Activated CD4-positive, alpha-beta T cell treated with anti-CD3 and anti-CD28 coated beads for 36 hours (primary cell): ENCODE measurements at regions of chr2 and their contacts with region 1.

Region 1: DNA sequence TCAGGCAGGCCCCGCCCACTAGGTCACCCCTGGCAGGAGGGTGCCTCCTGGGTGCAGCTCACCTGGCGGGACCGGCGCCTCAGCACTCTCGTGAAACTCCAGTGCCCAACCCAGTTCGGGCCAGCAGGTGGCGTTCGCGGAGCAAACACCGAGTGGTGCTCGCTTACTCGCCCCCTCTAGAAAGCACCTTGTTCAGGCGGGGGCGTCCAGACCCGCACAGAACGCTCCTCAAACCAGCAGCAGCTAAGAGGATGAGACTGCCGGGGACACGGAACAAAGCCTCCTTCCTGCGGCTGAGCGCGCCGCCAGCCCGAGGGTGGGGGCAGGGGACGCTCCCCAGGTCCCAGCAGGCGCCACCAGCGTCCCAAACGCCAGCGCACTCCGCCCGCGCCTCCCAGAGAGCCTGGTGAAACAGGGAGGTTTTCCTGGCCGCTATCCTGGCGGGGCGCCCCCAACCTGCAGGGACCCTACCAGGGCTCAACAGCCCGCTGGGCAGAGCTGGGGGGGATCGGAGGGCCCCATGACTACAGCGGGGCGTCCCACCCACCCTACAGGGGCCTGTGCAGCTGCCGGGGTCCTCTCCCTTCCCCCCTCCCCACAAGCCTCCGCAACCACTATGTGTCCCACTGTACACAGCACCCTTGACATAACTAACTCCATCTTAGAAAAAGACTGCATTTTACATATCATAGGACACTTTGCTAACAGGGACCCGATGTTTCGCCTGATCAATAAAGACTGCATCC is 44.7 kb downstream of the MRPS5 start:
- DNase-seq: peak; percentile 96
- ATAC-seq: peak; percentile 77
- H3K4me3 Mint-ChIP-seq: peak overlapping the region; percentile 69
- H3K27ac Mint-ChIP-seq: peak overlapping the region; percentile 78
- H3K4me1 Mint-ChIP-seq: peaks cover 71% of the 10 kb centered on the region
- H3K27me3 Mint-ChIP-seq: no peaks in the 10 kb centered on the region

Region 2: GRCh38 chr2:94986392-94986963 is 90.5 kb before region 1 on chr2:
- CTCF ChIA-PET with region 1: interaction called, 4 read pairs
- POLR2A ChIA-PET with region 1: no interaction called
- intact Hi-C with region 1: loop called in 1 of 2 experiments (anchors 1 kb)
- DNase-seq: peak; percentile 70
- ATAC-seq: peak; percentile 55
- H3K4me3 Mint-ChIP-seq: no peak overlapping the region
- H3K27ac Mint-ChIP-seq: no peak overlapping the region
- H3K4me1 Mint-ChIP-seq: no peaks in the 10 kb centered on the region
- H3K27me3 Mint-ChIP-seq: peaks cover 3% of the 10 kb centered on the region

Region 3: GRCh38 chr2:95034221-95034620 is 42.7 kb before region 1 on chr2:
- CTCF ChIA-PET with region 1: interaction called, 17 read pairs
- POLR2A ChIA-PET with region 1: interaction called, 3 read pairs
- intact Hi-C with region 1: no loop called
- DNase-seq: peak; percentile 50
- ATAC-seq: peak; percentile 84
- H3K4me3 Mint-ChIP-seq: no peak overlapping the region
- H3K27ac Mint-ChIP-seq: no peak overlapping the region
- H3K4me1 Mint-ChIP-seq: peaks cover 79% of the 10 kb centered on the region
- H3K27me3 Mint-ChIP-seq: no peaks in the 10 kb centered on the region

Region 4: GRCh38 chr2:95053543-95053942 is 23.4 kb before region 1 on chr2:
- CTCF ChIA-PET with region 1: interaction called, 64 read pairs
- POLR2A ChIA-PET with region 1: interaction called, 3 read pairs
- intact Hi-C with region 1: loop called in 1 of 2 experiments (anchors 2 kb)
- DNase-seq: peak; percentile 51
- ATAC-seq: no peak
- H3K4me3 Mint-ChIP-seq: no peak overlapping the region
- H3K27ac Mint-ChIP-seq: no peak overlapping the region
- H3K4me1 Mint-ChIP-seq: peaks cover 67% of the 10 kb centered on the region
- H3K27me3 Mint-ChIP-seq: no peaks in the 10 kb centered on the region

Region 5: DNA sequence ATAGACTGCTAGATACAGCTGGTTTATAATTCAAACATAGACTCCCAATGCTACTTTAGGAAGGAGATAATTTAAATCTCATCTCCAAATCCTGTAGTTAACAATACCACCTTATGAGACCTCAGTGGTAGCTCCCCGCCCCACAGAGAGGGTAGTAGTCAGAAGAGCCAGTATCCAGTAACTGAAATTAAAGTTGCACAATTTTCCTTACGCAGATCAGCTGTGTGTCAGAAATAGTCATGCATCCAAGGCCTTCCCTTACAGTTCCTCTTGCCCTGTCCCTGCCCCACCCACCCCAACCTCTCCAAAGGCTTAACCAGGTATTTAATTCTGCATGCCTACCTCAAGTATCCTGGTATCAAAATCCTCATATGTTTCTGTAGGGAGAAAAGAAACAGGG is 29.1 kb after region 1 on chr2:
- CTCF ChIA-PET with region 1: interaction called, 11 read pairs
- POLR2A ChIA-PET with region 1: interaction called, 7 read pairs
- intact Hi-C with region 1: no loop called
- DNase-seq: no peak
- ATAC-seq: no peak
- H3K4me3 Mint-ChIP-seq: no peak overlapping the region
- H3K27ac Mint-ChIP-seq: peak overlapping the region; percentile 4
- H3K4me1 Mint-ChIP-seq: no peaks in the 10 kb centered on the region
- H3K27me3 Mint-ChIP-seq: no peaks in the 10 kb centered on the region

Region 6: GRCh38 chr2:95121407-95122196 is 44.6 kb after region 1 on chr2 and contains the start of gene MRPS5:
- CTCF ChIA-PET with region 1: interaction called, 49 read pairs
- POLR2A ChIA-PET with region 1: no interaction called
- intact Hi-C with region 1: loop called (anchors 2 kb)
- DNase-seq: peak; percentile 93
- ATAC-seq: peak; percentile 89
- H3K4me3 Mint-ChIP-seq: peak within 1 kb of the TSS; percentile 97
- H3K27ac Mint-ChIP-seq: peak within 1 kb of the TSS; percentile 94
- H3K4me1 Mint-ChIP-seq: peaks cover 37% of the 10 kb centered on the region
- H3K27me3 Mint-ChIP-seq: no peaks in the 10 kb centered on the region
- total RNA-seq, gene MRPS5: 90.7 to 97.1 TPM

Region 7: GRCh38 chr2:95165129-95166064 is 88.4 kb after region 1 on chr2 and contains the start of gene ZNF2:
- CTCF ChIA-PET with region 1: interaction called, 6 read pairs
- POLR2A ChIA-PET with region 1: no interaction called
- intact Hi-C with region 1: loop called in 1 of 2 experiments (anchors 2 kb)
- DNase-seq: peak; percentile 98
- ATAC-seq: peak; percentile 98
- H3K4me3 Mint-ChIP-seq: peak within 1 kb of the TSS; percentile 96
- H3K27ac Mint-ChIP-seq: peak within 1 kb of the TSS; percentile 94
- H3K4me1 Mint-ChIP-seq: peaks cover 24% of the 10 kb centered on the region
- H3K27me3 Mint-ChIP-seq: no peaks in the 10 kb centered on the region
- total RNA-seq, gene ZNF2: 4.3 to 5.1 TPM